ENCODE measurements at regions of chr15 and their contacts with region 1.

Region 1: DNA sequence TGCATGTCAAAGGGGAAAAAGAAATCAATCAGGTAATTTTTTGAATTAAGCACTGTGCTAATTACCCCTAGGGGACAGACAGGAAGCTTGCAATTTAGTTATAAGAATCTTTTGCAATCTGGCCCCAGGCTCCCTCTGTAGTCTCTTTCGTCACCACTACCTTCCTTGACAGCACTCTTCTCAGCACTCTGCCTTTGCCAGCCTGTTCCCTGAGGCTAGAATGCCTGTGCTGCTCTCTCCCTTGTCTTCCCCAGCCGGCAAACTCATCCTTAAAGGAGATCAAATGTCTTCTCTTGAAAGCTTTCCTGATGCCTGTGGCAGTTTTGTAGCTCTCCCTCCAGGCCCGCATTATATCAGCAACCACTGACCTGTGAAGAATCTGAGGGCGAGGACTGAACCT is 32.4 kb upstream of the PRTG start:
- DNase-seq: no peak
- H3K4me3 ChIP-seq: no peak overlapping the region
- H3K27me3 ChIP-seq: peaks cover 2% of the 10 kb centered on the region
- CTCF ChIP-seq: no peak

Region 2: DNA sequence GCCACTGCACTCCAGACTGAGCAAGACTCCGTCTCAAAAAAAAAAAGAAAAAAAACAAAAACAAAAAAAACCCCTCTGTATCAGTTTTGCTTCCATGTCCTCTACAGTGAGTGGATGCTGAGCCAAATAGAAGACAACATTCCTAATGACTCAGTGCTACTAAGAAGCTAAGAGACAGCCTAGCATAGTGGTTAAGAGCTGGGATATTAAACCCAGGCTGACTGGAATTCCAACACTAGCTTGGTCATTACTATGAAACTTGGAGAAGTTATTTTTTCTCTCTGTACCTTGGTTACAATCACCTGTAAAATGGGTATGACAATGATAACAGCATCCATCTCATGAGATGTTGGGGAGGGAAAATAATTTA is 126.3 kb before region 1 on chr15:
- CTCF ChIA-PET with region 1: interaction called, 14 read pairs
- POLR2A ChIA-PET with region 1: no interaction called
- DNase-seq: peak; percentile 25
- H3K4me3 ChIP-seq: no peak overlapping the region
- H3K27me3 ChIP-seq: no peaks in the 10 kb centered on the region
- CTCF ChIP-seq: no peak

Region 3: DNA sequence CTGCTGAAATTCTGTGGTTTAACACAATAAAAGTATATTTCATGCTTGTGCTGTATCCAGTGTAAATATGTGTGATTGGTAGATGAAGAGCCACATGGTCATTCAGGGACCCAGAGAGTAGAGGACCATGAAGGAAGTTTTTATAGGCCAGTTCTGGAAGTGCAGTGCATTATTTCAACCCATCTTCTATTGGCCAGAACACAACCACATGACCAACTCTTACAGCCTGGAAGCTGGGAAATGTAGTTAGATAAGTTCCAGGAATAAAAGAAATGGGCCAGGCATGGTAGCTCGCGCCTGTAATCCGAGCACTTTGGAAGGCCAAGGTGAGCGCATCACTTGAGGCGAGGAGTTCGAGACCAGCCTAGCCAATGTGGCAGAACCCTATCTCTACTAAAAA is 10.9 kb before region 1 on chr15:
- CTCF ChIA-PET with region 1: interaction called, 16 read pairs
- POLR2A ChIA-PET with region 1: no interaction called
- DNase-seq: no peak
- H3K4me3 ChIP-seq: no peak overlapping the region
- H3K27me3 ChIP-seq: no peaks in the 10 kb centered on the region
- CTCF ChIP-seq: no peak

Region 4: DNA sequence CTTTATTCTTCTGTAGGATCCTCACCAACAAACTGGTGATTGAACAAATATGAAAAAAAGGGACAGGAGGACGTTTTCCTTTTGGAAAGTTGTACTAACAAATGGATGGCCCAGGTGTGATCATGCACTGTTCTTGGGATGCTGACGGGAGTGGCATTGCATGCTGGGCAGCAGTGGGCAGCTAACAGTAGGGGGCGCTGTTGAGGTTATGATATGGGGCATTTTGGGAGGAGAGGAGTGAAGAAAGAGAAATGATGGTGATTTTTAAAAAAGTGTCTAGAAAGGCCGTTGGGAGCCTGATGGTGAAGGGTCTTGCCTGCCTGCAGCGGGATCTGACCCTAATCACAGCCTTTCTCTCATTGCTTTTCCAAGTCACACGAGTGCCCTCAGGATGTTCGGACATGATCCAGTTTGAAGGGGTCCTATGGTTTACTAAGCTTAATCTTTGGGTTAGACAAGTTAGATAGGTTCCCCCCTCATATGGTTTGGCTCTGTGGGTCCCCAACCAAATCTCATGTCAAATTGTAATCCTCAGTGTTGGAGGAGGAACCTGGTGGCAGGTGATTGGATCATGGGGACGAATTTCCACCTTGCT is 13.8 kb after region 1 on chr15:
- CTCF ChIA-PET with region 1: interaction called, 64 read pairs
- POLR2A ChIA-PET with region 1: no interaction called
- DNase-seq: no peak
- H3K4me3 ChIP-seq: no peak overlapping the region
- H3K27me3 ChIP-seq: no peaks in the 10 kb centered on the region
- CTCF ChIP-seq: peak; percentile 51

Region 5: DNA sequence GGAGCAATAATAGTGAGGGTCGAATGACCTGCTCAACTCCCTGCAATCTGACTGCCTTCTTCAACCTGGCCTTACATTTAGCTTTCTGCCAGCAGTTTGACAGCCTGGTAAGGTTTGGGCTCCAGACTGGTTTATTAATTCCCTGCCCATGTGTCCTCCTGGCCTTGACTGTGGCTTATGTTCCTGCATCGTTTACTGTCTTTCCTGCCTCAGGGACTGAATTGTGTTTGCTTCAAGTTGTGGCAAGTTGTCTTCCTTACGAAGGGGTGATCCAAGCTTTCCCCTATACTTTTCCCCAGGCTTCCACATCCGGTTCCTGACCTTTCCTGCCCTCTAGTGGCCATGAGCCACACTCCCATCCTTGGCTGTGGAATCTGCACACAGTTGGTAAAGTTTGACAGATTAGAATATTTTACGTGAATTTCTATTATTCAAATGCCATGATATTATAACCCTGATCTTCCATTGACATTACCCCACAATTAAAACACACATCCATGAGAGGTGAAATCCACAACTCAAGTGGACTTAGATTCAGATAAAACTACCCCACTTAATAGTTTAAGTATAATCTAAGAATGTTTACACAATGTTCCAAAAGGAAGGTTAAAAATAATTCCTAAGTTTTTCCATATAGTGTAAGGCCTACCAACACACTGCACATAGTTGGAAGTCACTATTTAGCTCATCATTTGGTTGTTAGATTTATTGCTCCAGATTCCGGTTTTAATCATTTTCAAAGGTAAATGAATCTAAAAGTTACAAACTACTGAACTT is 122.4 kb after region 1 on chr15:
- CTCF ChIA-PET with region 1: no interaction called
- POLR2A ChIA-PET with region 1: no interaction called
- DNase-seq: no peak
- H3K4me3 ChIP-seq: no peak overlapping the region
- H3K27me3 ChIP-seq: no peaks in the 10 kb centered on the region
- CTCF ChIP-seq: peak; percentile 81